Vagina (tissue), 2 donors: ENCODE measurements at regions of chr16 and their contacts with region 1.

Region 1: DNA sequence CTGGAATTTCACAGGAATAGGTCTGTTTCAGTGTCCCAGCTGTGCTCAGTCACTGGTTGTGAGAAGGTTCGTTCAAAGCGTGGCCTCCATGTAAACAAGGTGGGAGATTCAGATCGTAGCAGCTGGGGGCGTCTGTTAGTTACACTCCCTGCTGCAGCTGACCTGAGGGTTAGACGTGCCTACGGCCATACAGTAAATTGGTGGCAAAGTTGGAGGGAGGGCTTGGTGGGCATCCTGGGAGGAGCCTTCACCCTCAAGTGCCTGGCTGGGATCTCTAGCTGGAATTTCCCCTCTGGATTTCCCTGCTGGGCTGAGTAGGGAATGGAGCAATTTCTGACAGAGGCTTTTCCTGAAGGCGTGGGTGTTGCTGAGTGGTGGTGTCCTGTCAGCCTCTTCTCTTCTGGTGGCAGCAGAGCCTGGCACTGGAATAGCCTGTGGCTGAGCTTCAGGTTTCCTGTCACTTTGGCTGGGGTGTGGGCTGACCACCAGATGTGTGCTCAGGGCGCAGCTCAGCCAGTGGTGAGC is 6.4 kb downstream of the FCSK start:
- DNase-seq: no peak
- H3K4me3 ChIP-seq: no peak overlapping the region
- H3K27ac ChIP-seq: no peak overlapping the region
- H3K4me1 ChIP-seq: peaks cover 5% of the 10 kb centered on the region
- H3K27me3 ChIP-seq: no peaks in the 10 kb centered on the region
- CTCF ChIP-seq: no peak
- POLR2A ChIP-seq: no peak

Region 2: GRCh38 chr16:70348991-70349390 is 111.8 kb before region 1 on chr16:
- intact Hi-C with region 1: no loop called
- DNase-seq: no peak
- H3K4me3 ChIP-seq: no peak overlapping the region
- H3K27ac ChIP-seq: no peak overlapping the region
- H3K4me1 ChIP-seq: peaks cover 16% of the 10 kb centered on the region
- H3K27me3 ChIP-seq: no peaks in the 10 kb centered on the region
- CTCF ChIP-seq: no peak
- POLR2A ChIP-seq: no peak

Region 3: GRCh38 chr16:70380861-70381603 is 79.8 kb before region 1 on chr16:
- intact Hi-C with region 1: loop called (anchors 10 kb)
- DNase-seq: peak in 1 of 2 donors; percentile 99
- H3K4me3 ChIP-seq: peak overlapping the region; percentile 64 to 79
- H3K27ac ChIP-seq: peak overlapping the region; percentile 82
- H3K4me1 ChIP-seq: peaks cover 25% of the 10 kb centered on the region
- H3K27me3 ChIP-seq: no peaks in the 10 kb centered on the region
- CTCF ChIP-seq: no peak
- POLR2A ChIP-seq: peak; percentile 6 to 53

Region 4: GRCh38 chr16:70553645-70554044 is 92.8 kb after region 1 on chr16:
- intact Hi-C with region 1: no loop called
- DNase-seq: no peak
- H3K4me3 ChIP-seq: no peak overlapping the region
- H3K27ac ChIP-seq: peak overlapping the region; percentile 37
- H3K4me1 ChIP-seq: peaks cover 21% of the 10 kb centered on the region
- H3K27me3 ChIP-seq: no peaks in the 10 kb centered on the region
- CTCF ChIP-seq: no peak
- POLR2A ChIP-seq: no peak